Activated CD4-positive, alpha-beta T cell treated with anti-CD3 and anti-CD28 coated beads, Interleukin-2, amount 10 ng/mL, durations not matched to agents 7 days and 5 days (primary cell): ENCODE measurements at regions of chr10 and their contacts with region 1.

Region 1: DNA sequence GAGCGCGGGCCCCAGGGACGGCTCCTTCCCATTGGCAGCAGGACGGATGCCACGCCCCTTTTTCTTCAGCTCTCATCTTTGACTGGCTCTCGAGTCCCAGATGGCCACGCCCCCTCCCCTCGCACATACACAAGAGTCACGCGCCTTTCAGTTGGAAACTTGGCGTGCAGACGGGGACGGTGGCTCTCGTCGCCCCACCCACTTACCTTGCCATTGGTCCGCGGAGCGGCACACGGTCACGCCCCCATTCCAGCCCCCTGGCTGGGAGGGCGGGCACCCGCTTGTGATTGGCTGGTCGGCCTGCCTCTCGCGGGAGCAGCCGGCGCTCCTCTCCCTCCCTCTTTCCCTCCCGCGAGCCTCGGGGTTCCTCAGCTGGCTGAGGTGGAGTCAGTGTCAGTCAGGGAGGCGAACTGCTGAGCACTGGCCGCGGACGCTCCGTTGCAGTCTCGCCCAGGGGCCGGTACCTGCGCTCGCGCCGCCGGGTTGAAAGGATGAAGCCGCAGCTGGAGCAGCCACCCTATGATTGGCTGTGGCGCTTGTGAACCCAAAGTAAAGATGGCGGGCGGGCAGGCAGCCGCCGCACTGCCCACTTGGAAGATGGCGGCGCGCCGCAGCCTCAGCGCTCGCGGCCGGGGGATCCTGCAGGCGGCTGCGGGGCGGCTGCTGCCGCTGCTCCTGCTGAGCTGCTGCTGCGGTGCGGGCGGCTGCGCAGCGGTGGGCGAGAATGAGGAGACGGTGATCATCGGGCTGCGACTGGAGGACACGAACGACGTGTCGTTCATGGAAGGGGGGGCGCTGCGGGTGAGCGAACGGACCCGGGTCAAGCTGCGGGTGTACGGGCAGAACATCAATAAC is at the start of gene CNNM2:
- DNase-seq: peak; percentile 100
- H3K4me3 Mint-ChIP-seq: peak within 1 kb of the TSS; percentile 93
- H3K27ac Mint-ChIP-seq: peak within 1 kb of the TSS; percentile 94
- H3K4me1 Mint-ChIP-seq: peaks cover 58% of the 10 kb centered on the region
- H3K27me3 Mint-ChIP-seq: peaks cover 5% of the 10 kb centered on the region
- total RNA-seq, gene CNNM2: 6.2 to 6.3 TPM

Region 2: GRCh38 chr10:102888048-102888447 is 30.1 kb before region 1 on chr10:
- CTCF ChIA-PET with region 1: no interaction called
- POLR2A ChIA-PET with region 1: no interaction called
- DNase-seq: no peak
- H3K4me3 Mint-ChIP-seq: no peak overlapping the region
- H3K27ac Mint-ChIP-seq: no peak overlapping the region
- H3K4me1 Mint-ChIP-seq: no peaks in the 10 kb centered on the region
- H3K27me3 Mint-ChIP-seq: no peaks in the 10 kb centered on the region

Region 3: DNA sequence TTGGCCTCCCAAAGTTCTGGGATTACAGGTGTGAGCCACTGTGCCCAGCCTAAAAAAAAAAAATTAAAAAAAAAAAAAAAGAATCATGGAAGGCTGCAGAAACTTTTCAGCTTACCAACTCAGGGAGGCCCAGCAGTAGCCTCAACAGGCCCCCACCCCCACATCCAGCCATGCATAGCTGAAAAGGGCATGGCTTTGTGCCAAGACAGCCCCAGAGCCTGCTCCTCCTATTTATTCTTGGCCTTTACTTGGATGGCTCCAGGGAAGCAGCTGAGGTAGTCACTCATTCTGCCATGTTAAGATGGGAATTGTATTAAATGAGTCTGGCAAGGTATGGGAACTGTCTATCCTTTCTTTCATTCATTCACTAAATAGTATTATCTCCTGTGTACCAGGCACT is 13.8 kb before region 1 on chr10:
- CTCF ChIA-PET with region 1: interaction called, 15 read pairs
- POLR2A ChIA-PET with region 1: no interaction called
- DNase-seq: no peak
- H3K4me3 Mint-ChIP-seq: no peak overlapping the region
- H3K27ac Mint-ChIP-seq: no peak overlapping the region
- H3K4me1 Mint-ChIP-seq: no peaks in the 10 kb centered on the region
- H3K27me3 Mint-ChIP-seq: no peaks in the 10 kb centered on the region

Region 4: GRCh38 chr10:103069453-103070331 is 151.5 kb after region 1 on chr10:
- CTCF ChIA-PET with region 1: interaction called, 32 read pairs
- POLR2A ChIA-PET with region 1: no interaction called
- DNase-seq: peak; percentile 82
- H3K4me3 Mint-ChIP-seq: no peak overlapping the region
- H3K27ac Mint-ChIP-seq: peak overlapping the region; percentile 76
- H3K4me1 Mint-ChIP-seq: peaks cover 34% of the 10 kb centered on the region
- H3K27me3 Mint-ChIP-seq: no peaks in the 10 kb centered on the region

Region 5: GRCh38 chr10:103117247-103117646 is 199.1 kb after region 1 on chr10:
- CTCF ChIA-PET with region 1: no interaction called
- POLR2A ChIA-PET with region 1: no interaction called
- DNase-seq: no peak
- H3K4me3 Mint-ChIP-seq: no peak overlapping the region
- H3K27ac Mint-ChIP-seq: no peak overlapping the region
- H3K4me1 Mint-ChIP-seq: peaks cover 6% of the 10 kb centered on the region
- H3K27me3 Mint-ChIP-seq: no peaks in the 10 kb centered on the region

Region 6: DNA sequence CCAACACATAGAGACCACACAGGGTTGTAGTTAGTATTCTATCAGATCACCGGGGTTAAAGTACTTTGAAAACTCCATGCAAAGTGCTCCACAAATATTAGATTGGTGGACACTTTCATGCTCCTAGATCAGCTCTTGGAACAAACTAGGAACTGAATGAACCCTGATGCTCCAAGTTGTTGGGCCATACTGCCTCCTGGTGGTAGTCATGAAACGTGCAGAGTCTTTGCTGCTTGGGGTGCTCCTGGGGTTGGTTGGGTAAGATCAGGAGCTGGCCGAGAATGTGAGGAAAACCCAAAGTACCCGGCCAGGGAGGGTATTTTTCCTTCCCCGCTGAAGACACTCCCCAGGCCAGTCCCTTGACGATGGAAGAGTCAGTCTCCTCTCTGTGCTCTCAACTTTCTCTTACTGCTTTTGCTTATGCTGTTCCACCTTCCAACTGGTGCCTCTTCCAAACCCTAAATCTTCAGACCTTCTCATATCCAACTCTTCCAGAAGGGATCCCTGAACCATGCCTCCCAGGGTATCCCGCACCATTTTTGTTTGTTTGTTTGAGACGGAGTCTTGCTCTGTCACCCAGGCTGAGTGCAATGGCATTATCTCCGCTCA is 326.6 kb after region 1 on chr10:
- CTCF ChIA-PET with region 1: interaction called, 13 read pairs
- POLR2A ChIA-PET with region 1: interaction called, 3 read pairs
- DNase-seq: peak; percentile 74
- H3K4me3 Mint-ChIP-seq: no peak overlapping the region
- H3K27ac Mint-ChIP-seq: peak overlapping the region; percentile 50
- H3K4me1 Mint-ChIP-seq: peaks cover 22% of the 10 kb centered on the region
- H3K27me3 Mint-ChIP-seq: peaks cover 4% of the 10 kb centered on the region